ENCODE measurements at regions of chr12 and their contacts with region 1.

Region 1: DNA sequence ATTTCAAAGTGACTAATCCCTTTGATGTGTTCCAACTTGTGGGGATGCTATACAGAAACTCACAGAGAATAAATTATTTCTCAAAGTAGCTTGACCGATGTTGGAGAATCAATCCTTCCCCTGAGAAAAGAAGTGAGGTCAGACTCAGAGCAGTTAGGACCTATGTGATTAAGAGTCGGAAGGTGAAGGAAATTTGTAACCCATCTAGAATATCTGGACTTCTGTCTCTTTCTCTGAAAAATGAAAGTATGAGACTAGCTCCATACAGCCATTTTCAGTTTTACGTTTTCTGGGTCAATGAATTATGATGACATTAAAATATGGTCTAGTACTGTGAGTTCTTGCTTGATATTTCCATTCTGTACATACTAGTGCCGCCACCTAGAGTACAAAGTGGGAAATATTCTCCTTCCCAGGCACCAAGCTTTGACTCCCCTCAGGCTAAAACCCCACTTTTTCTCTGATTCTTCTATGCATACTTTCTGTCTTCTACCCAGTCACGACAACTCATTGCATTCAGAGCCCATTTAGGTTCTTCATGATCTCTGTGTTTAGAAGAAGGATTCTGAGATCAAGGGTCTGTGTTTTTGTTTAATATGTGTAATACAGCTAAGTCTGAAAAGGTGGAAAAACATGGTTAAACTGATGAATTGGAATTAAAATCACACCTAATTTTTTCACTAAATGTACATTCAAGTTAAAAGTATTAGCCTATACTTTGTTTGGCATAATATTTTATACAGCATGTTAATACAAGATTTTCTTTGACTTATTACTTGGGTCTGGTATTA is 6.9 kb upstream of the NTS start:
- DNase-seq: peak; percentile 67
- H3K4me3 ChIP-seq: no peak overlapping the region
- CTCF ChIP-seq: peak; percentile 76

Region 2: DNA sequence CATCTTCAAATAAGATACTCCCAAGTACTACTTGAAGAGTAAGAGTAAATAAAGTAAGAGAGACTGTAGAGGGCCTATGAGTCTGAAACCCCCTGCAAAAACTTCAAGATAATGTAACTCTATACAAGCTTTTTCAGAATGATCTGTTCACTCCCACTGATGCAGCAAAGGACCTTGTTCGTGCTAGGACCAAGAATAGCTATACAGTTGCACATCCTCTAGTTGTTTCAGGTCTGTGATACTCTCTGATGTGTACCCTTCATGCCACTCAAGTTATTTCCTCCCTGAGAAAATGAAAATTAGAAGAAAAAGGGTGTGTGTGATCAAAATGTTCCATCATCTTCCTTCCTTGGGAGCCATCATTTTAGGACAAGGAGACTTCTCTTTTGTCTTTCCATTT is 382.8 kb before region 1 on chr12:
- in situ Hi-C with region 1: loop called (anchors 25 kb)
- DNase-seq: no peak
- H3K4me3 ChIP-seq: no peak overlapping the region
- CTCF ChIP-seq: no peak

Region 3: GRCh38 chr12:85568395-85569103 is 298.6 kb before region 1 on chr12:
- in situ Hi-C with region 1: loop called (anchors 25 kb)
- DNase-seq: no peak
- H3K4me3 ChIP-seq: no peak overlapping the region
- CTCF ChIP-seq: no peak

Region 4: GRCh38 chr12:85979641-85980040 is 112.5 kb after region 1 on chr12:
- in situ Hi-C with region 1: no loop called
- DNase-seq: no peak
- H3K4me3 ChIP-seq: no peak overlapping the region
- CTCF ChIP-seq: no peak

Measured in astrocyte of the cerebellum (primary cell).